ENCODE measurements at regions of chr3 and their contacts with region 1.

Region 1: GRCh38 chr3:139329345-139329850 is 14.4 kb upstream of the MRPS22 start:
- DNase-seq: peak; percentile 97

Region 2: DNA sequence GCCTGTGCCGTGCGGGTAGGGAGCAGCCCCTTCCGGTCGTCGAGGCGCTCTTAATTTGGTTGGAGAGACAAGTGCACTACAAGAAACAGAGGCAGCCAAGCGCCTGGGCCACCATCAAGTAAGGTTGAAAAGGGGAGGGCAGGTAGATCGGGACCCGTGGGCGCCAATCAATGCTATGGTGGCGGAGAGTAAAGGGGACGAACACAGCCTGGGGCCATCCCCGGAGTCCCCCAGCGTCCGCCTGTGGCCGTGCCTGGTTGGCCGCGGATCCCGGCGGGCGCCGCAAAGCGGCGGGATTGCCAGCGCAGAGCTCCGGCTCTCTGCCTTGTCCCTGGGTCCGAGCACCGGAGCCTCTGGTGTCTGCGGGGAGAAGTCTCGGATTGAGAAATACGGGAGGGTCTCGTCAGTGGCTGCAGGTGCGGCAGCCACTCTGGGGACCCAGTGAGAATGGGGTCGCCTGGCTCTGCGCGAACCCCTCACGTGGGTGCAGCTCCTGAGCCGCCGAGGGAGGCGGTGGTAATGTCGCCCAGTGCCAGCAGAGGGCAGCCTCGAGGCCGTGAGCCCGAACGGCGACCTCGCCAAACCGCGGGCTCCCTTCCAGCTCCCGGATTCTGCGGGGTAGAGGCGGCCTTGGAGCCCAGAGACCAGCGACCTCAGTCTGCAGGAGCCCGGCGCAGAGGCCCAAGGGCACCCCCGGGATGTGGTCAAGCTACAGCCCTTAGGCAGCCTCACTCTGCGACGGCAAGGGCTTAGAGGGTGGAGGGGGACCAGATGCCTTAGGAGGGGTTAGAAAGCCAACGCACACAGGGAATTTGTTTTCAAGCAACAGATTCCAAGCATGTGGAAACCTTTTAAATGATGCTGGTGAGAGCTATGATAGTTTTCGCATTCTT is 393.3 kb before region 1 on chr3:
- intact Hi-C with region 1: loop called in 1 of 2 experiments (anchors 10 kb)
- DNase-seq: peak; percentile 93

Region 3: DNA sequence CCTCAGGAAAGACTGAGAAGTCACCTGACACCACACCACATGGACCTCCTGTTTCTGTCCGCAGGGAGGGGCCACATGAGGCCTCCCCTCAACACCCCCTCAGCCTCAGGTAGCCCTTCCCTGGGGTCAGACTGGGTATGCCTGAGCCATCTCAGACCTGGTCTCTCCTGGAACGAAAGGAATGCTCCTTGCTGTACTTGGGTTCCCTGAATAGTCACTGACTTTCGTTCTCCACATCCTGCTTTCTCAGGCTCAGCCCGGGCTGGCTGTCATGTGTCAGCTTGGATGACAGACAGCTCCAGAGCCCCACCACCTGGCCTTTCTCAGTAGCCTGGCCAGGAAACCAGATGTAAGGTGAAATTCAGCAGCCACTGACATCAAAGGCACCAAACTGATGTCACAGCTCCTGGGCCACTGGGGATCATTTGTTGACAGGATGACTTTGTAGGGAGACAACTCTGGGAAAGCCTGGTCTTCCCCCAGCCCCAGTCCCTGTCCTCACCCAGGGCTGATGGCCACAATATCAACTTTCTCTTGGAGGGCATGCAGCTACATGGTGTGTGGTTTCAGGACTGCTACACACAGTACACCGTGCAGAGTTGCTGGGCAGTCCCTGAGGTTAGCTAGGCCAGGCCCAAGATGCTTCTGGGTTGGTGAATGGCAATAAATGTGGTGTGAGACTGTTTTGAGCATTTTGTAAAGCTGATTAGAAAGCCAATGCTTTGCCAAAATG is 127.0 kb before region 1 on chr3:
- intact Hi-C with region 1: no loop called
- DNase-seq: no peak

Measured in posterior vena cava (tissue), 2 donors.